Calu3 (cell line): ENCODE measurements at regions of chr5 and their contacts with region 1.

Region 1: DNA sequence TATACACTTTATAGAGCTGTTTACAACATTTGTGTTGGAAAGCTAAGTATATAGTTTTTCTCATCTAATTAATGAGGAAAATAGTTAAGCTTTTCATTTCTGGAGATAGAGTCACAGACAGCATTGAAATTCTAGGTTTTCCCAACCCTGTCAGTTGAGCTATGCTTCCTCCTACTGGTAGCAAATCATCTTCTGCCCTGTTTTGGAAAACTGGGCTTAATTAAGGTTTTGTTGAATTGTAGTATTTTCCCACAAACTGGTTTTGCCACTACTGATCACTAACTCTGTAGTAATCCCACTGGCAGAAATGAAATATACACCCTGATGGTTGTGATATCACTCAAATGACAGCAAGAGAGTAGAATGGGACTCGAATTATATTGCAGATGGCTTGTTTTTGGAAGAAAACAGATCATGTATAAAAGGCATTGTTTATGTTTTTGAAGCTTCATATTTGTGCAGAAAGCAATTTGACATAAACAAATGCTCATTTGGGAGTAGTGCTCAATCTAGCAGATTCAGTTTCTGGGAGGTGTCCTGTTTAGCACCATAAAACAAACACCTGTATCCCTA is 46.6 kb downstream of the CD180 start:
- DNase-seq: no peak
- H3K4me3 Mint-ChIP-seq: no peak overlapping the region
- H3K27ac Mint-ChIP-seq: no peak overlapping the region
- H3K4me1 Mint-ChIP-seq: no peaks in the 10 kb centered on the region
- H3K27me3 Mint-ChIP-seq: no peaks in the 10 kb centered on the region
- CTCF ChIP-seq: no peak

Region 2: GRCh38 chr5:66807743-66808142 is 342.3 kb before region 1 on chr5:
- CTCF ChIA-PET with region 1: no interaction called
- intact Hi-C with region 1: loop called (anchors 1 kb)
- DNase-seq: peak; percentile 42
- H3K4me3 Mint-ChIP-seq: no peak overlapping the region
- H3K27ac Mint-ChIP-seq: no peak overlapping the region
- H3K4me1 Mint-ChIP-seq: peaks cover 10% of the 10 kb centered on the region
- H3K27me3 Mint-ChIP-seq: peaks cover 45% of the 10 kb centered on the region
- CTCF ChIP-seq: peak; percentile 24

Region 3: DNA sequence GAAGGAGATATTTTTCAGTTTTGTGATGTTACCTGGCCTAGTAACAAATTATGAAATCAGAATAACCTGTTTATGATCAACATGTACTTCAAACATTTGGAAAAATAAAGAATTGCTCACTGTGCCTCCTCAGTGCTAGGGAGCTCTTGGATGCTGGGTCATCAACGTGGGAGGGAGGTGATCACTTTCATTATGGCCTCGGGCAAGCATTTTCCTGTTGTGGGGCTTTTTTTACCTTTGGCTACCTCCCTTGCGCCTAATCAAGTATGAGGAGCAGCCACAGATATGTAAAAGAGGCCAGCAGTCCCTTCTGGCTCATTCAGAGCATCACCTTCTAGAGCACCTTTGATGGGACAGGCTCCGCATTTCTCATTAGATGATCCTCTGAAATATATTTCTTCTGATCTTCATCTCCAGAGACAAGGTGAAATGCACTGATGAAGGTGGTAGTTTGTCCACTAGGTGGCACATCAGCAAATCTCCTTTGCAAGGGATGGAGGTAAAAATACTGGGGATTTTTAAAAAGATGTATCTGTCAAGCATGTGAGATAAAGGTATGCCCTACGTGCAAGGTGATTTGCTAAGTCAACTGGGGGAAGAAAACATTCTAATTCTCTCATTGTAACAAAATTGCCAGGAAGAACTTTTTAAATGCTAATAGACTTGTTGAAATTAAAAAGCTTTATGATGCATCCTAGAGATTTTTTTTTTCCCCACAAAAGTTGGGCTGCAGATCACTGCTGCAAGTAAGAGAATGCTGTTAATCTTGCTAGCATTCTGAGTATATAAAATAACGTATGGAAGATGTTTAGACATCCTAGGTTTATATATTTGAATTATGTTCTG is 335.7 kb before region 1 on chr5:
- CTCF ChIA-PET with region 1: interaction called, 5 read pairs
- intact Hi-C with region 1: loop called (anchors 2 kb)
- DNase-seq: peak; percentile 54
- H3K4me3 Mint-ChIP-seq: no peak overlapping the region
- H3K27ac Mint-ChIP-seq: no peak overlapping the region
- H3K4me1 Mint-ChIP-seq: no peaks in the 10 kb centered on the region
- H3K27me3 Mint-ChIP-seq: no peaks in the 10 kb centered on the region
- CTCF ChIP-seq: peak; percentile 72

Region 4: DNA sequence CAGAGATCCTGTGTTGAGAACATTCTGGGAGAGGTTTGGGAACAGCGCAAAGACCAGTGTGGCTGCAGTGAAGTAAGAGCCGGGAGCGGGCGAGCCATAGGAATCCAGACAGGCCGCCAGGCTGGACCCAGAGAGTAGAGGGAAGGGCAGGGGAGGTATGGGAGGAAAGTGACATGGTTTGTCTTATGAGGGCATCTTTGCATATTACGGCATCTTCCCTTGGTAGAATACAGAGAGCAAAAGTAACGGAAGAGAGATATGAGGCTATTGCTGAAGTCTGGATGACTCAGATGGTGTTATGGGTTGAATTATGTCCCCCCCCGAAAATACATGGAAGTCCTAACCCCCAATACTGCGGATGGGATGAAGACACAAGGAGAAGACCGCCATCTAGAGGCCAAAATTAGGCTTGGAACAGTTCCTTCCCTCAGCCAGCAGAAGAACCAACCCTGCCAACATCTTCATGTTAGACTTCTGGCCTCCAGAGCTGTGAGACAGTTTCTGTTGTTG is 285.7 kb before region 1 on chr5:
- CTCF ChIA-PET with region 1: no interaction called
- intact Hi-C with region 1: no loop called
- DNase-seq: no peak
- H3K4me3 Mint-ChIP-seq: no peak overlapping the region
- H3K27ac Mint-ChIP-seq: no peak overlapping the region
- H3K4me1 Mint-ChIP-seq: peaks cover 9% of the 10 kb centered on the region
- H3K27me3 Mint-ChIP-seq: no peaks in the 10 kb centered on the region
- CTCF ChIP-seq: no peak

Region 5: GRCh38 chr5:66987949-66988838 is 161.8 kb before region 1 on chr5:
- CTCF ChIA-PET with region 1: interaction called, 5 read pairs
- intact Hi-C with region 1: loop called (anchors 2 kb)
- DNase-seq: no peak
- H3K4me3 Mint-ChIP-seq: no peak overlapping the region
- H3K27ac Mint-ChIP-seq: no peak overlapping the region
- H3K4me1 Mint-ChIP-seq: no peaks in the 10 kb centered on the region
- H3K27me3 Mint-ChIP-seq: peaks cover 17% of the 10 kb centered on the region
- CTCF ChIP-seq: peak; percentile 77

Region 6: DNA sequence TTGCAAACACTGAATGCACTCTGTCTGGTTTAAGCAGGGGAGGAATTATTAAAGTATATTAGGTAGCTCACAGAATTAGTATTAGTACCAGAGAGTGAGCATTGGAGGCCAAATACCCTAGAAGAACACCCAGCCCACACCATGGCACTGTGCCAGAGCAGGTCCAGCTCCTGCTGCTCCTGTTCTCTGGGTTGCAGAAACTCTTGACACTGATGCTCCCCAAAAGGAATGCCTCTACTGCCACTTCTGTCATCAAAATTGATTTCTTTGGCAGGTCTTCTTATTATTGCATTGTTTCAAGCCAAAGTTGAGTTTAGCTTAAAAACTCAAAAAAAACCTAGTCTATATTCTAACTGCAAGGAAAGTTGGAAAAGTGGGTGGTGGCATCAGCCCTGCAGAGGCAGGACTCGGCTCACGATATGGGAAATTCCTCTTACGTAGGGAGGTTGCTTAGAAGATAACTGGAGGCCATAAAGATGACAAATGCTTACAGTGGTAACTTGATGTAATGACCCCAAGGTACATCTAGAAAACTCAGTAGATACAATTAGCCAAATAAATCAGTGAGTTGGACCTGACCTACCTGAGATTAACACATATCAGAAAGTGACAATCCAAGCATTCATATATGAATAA is 76.9 kb before region 1 on chr5:
- CTCF ChIA-PET with region 1: no interaction called
- intact Hi-C with region 1: no loop called
- DNase-seq: no peak
- H3K4me3 Mint-ChIP-seq: no peak overlapping the region
- H3K27ac Mint-ChIP-seq: no peak overlapping the region
- H3K4me1 Mint-ChIP-seq: no peaks in the 10 kb centered on the region
- H3K27me3 Mint-ChIP-seq: no peaks in the 10 kb centered on the region
- CTCF ChIP-seq: no peak